ENCODE measurements at regions of chr14 and their contacts with region 1.

Region 1: GRCh38 chr14:102096214-102097114 is 9.6 kb upstream of the HSP90AA1 start:
- DNase-seq: peak; percentile 55
- H3K4me3 ChIP-seq: no peak overlapping the region
- H3K27ac ChIP-seq: no peak overlapping the region
- H3K4me1 ChIP-seq: peaks cover 19% of the 10 kb centered on the region
- H3K27me3 ChIP-seq: no peaks in the 10 kb centered on the region
- CTCF ChIP-seq: peak; percentile 77 to 85

Region 2: DNA sequence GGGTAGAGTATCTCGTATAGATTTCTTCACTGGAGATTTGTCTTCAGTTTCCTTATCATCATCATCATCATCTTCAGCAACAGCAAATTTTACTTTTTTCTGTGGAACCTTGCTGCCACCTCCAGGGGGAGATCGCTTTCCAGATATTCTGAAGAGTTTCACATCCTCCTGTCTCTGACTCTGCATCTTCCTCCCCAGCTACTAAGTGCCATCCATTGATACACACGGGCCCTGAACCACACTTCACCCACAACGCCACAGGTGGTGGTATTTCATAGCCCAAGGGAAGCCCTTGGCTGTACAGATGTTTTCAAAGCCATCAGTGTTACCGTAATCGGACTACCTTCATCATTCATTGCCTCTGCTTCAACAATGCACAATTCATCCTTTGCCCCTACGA is 252.8 kb before region 1 on chr14:
- CTCF ChIA-PET with region 1: no interaction called
- dilution Hi-C with region 1: no loop called
- in situ Hi-C with region 1: no loop called
- intact Hi-C with region 1: no loop called
- DNase-seq: no peak
- H3K4me3 ChIP-seq: no peak overlapping the region
- H3K27ac ChIP-seq: no peak overlapping the region
- H3K4me1 ChIP-seq: peaks cover 8% of the 10 kb centered on the region
- H3K27me3 ChIP-seq: no peaks in the 10 kb centered on the region
- CTCF ChIP-seq: peak; percentile 18

Region 3: DNA sequence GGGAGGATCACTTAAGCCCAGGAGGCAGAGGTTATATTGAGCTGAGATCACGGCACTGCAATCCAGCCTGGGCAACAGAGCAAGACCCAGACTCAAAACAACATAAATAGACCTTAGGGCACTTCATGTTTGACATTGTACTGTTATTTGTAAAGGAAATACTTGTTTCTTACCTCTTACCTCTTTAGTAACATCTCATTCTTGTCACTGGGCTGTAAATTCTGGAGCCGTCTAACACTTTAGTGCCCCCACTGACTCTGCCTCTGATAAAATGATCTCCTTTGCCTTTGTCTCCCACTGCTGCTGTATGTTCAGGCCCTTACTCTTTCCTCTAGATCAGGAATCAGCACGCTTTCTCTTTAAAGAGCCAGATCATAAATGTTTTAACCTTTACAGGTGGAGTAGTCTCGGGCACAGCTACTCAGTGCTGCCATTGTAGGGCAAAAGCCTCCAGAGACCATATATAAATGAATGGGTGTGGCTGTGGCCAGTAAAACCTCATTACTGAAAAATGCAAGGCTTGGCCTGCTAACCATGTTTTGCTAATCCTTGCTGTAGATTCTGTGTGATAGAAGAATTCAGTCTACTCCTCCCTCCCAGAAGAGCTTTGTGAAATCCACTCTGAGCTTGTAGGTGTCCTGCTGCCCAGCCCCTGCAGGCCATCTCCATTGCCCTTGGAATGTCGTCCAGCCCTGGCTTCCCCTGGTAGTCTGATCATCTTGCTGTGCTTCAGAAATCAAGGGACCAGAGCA is 67.9 kb before region 1 on chr14:
- CTCF ChIA-PET with region 1: no interaction called
- dilution Hi-C with region 1: loop called (anchors 10 kb)
- in situ Hi-C with region 1: no loop called
- intact Hi-C with region 1: loop called (anchors 2 kb)
- DNase-seq: peak; percentile 86
- H3K4me3 ChIP-seq: no peak overlapping the region
- H3K27ac ChIP-seq: peak overlapping the region; percentile 71
- H3K4me1 ChIP-seq: peaks cover 37% of the 10 kb centered on the region
- H3K27me3 ChIP-seq: no peaks in the 10 kb centered on the region
- CTCF ChIP-seq: no peak

Region 4: GRCh38 chr14:102063091-102063802 is 33.2 kb before region 1 on chr14:
- CTCF ChIA-PET with region 1: interaction called, 5 read pairs
- dilution Hi-C with region 1: no loop called
- in situ Hi-C with region 1: no loop called
- intact Hi-C with region 1: loop called (anchors 1 kb)
- DNase-seq: peak; percentile 84
- H3K4me3 ChIP-seq: no peak overlapping the region
- H3K27ac ChIP-seq: no peak overlapping the region
- H3K4me1 ChIP-seq: peaks cover 10% of the 10 kb centered on the region
- H3K27me3 ChIP-seq: no peaks in the 10 kb centered on the region
- CTCF ChIP-seq: peak; percentile 43 to 62

Region 5: GRCh38 chr14:102139248-102140026 is 43.0 kb after region 1 on chr14 and contains the start of gene WDR20:
- CTCF ChIA-PET with region 1: interaction called, 12 read pairs
- dilution Hi-C with region 1: no loop called
- in situ Hi-C with region 1: no loop called
- intact Hi-C with region 1: no loop called
- DNase-seq: peak; percentile 98
- H3K4me3 ChIP-seq: peak within 1 kb of the TSS; percentile 89 to 99 (median 95)
- H3K27ac ChIP-seq: peak within 1 kb of the TSS; percentile 74
- H3K4me1 ChIP-seq: peaks cover 6% of the 10 kb centered on the region
- H3K27me3 ChIP-seq: no peaks in the 10 kb centered on the region
- CTCF ChIP-seq: peak in 1 of 2 donors; percentile 23
- total RNA-seq, gene WDR20: 25.3 to 27.3 TPM

Measured in mammary epithelial cell (primary cell).